ENCODE measurements at regions of chr18 and their contacts with region 1.

Region 1: GRCh38 chr18:13494871-13495445 is 231.4 kb downstream of the FAM210A start:
- DNase-seq: no peak

Region 2: GRCh38 chr18:13447626-13448334 is 47.2 kb before region 1 on chr18:
- intact Hi-C with region 1: loop called in 1 of 2 experiments (anchors 10 kb)
- DNase-seq: peak; percentile 93

Region 3: GRCh38 chr18:13517369-13517768 is 22.4 kb after region 1 on chr18:
- intact Hi-C with region 1: loop called in 1 of 2 experiments (anchors 1 kb)
- DNase-seq: no peak